BJ (cell line): ENCODE measurements at regions of chr14 and their contacts with region 1.

Region 1: GRCh38 chr14:28751467-28752058 is 15.0 kb upstream of the FOXG1 start:
- DNase-seq: peak; percentile 1
- H3K4me3 ChIP-seq: no peak overlapping the region
- H3K27me3 ChIP-seq: peaks cover 14% of the 10 kb centered on the region
- CTCF ChIP-seq: peak; percentile 84

Region 2: DNA sequence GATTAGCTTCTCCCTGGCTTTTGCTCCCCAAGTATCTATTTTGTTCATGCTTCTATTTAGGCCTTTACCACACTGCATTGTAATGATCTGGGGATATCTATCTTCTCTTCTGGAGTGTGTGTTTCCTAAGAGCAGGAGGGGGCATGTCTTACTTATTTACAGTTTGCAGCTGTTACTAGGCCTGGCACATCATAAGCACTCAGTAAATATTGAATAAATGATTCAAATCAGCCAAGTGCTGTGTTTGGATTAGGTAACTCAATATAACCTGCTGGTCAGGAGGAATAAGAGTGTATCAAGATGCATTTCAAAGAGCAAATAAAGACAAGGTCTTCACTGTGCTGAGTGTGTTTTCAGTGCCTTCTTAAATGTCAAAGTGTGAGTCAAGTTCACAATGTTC is 201.1 kb after region 1 on chr14:
- CTCF ChIA-PET with region 1: no interaction called
- POLR2A ChIA-PET with region 1: no interaction called
- DNase-seq: no peak
- H3K4me3 ChIP-seq: no peak overlapping the region
- H3K27me3 ChIP-seq: no peaks in the 10 kb centered on the region
- CTCF ChIP-seq: no peak

Region 3: DNA sequence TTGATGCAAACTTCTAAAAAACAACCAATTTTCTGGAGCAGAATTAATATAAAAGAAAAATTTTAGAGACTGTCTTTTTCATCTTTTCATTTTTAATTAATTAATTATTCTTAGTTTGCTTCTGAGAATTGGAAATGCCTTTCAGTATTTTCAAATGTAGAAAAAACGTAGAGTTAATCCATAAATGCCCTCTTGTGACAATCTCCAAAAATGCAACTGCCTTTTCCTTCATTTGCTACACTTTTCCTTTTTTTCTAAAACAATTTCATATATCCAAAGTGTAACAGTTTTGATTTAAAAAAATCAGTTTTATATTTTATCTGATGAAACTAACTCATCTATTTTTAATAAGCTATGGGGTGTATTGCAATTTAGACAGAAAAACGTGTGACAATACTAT is 766.8 kb after region 1 on chr14:
- CTCF ChIA-PET with region 1: interaction called, 20 read pairs
- POLR2A ChIA-PET with region 1: no interaction called
- DNase-seq: no peak
- H3K4me3 ChIP-seq: no peak overlapping the region
- H3K27me3 ChIP-seq: no peaks in the 10 kb centered on the region
- CTCF ChIP-seq: peak; percentile 45

Region 4: GRCh38 chr14:29536886-29537511 is 785.4 kb after region 1 on chr14:
- CTCF ChIA-PET with region 1: interaction called, 122 read pairs
- POLR2A ChIA-PET with region 1: no interaction called
- DNase-seq: no peak
- H3K4me3 ChIP-seq: no peak overlapping the region
- H3K27me3 ChIP-seq: no peaks in the 10 kb centered on the region; the same call in 1 of the 2 replicates
- CTCF ChIP-seq: peak; percentile 51